GM23248 (cell line): ENCODE measurements at regions of chr7 and their contacts with region 1.

Region 1: DNA sequence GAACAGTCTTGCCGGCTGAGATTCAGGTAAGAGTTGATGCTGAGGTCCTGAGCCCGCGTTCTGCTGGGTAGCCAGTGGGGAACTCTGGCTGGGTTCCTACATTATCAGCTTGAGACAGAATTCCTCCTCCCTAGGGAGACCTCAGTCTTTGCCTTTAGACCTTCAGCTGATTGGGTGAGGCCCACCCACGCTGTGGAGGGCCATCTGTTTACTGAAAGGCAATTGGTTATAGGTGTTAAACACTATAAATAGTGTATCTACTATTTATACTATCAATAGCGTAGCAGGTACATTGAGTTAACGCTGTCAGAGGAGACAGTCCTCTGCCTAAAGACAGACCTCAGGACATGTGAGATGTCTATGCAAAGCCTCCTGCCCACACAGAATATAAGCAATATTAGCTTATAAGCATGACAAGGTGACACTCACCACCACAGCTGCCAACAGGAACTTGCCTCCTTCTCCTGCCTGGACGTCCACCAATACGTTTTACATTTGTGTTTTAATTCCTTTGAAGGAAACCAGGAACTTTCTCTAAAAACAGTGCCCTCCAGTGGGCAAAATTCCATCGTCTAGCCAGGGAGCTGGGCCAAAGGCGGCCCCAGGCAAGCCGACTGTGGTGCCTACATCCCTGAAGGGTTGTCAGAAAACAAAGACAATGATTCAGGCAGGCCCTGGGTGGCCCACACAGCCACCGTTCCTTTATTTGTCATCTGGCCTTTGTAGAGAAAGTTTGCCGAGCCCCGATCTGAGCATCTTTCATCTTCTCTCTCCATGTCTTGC is 58.8 kb downstream of the INSIG1 start:
- DNase-seq: peak; percentile 26
- H3K4me3 ChIP-seq: no peak overlapping the region
- H3K27ac ChIP-seq: no peak overlapping the region
- H3K4me1 ChIP-seq: no peaks in the 10 kb centered on the region
- H3K27me3 ChIP-seq: peaks cover 13% of the 10 kb centered on the region; the same call in 1 of the 2 replicates

Region 2: DNA sequence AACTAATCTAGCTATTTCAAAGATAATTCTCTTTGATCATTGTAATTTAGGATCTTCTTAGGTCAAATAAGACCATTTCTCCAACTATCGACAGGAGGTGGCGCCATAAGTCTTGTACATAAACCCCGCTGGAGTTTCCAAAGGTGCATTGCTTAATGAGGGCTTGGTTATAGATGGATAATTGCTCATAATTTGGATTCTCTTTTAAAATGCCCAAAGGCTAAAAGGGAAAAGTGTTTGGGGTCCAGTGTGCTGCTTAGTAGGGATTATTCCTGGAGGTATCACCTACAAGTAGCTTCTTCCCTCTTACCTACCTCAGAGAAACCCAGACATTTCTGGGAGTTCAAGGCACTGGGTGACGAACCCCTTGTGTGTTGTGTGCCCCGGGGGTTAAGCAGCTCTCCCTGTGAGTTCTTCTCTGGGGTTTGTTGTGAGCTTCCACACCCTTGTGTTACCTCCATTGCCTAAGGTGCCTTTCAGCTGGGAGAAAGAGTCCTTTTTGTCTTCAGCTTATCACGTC is 428.8 kb before region 1 on chr7:
- in situ Hi-C with region 1: loop called (anchors 10 kb)
- DNase-seq: peak; percentile 92
- H3K4me3 ChIP-seq: peak overlapping the region; percentile 90
- H3K27ac ChIP-seq: peak overlapping the region; percentile 87
- H3K4me1 ChIP-seq: no peaks in the 10 kb centered on the region
- H3K27me3 ChIP-seq: no peaks in the 10 kb centered on the region; the same call in 1 of the 2 replicates